ENCODE measurements at regions of chr11 and their contacts with region 1.

Region 1: DNA sequence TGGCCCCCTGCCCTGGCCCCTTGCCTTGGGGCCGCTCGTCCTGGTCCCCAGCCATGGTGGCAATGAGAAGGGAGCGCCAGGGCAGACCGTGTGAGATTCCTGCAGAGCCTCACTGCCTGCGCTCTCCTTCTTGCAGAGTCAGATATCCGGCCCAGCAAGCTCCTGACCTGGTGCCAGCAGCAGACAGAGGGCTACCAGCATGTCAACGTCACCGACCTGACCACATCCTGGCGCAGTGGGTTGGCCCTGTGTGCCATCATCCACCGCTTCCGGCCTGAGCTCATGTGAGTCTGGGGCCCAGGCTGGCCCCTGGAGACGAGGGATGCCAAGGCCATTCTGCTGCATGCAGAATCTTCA is 114.1 kb downstream of the MICAL2 start:
- DNase-seq: peak; percentile 98
- H3K4me3 Mint-ChIP-seq: peak overlapping the region; percentile 72
- H3K27ac Mint-ChIP-seq: peak overlapping the region; percentile 96
- H3K4me1 Mint-ChIP-seq: peaks cover 68% of the 10 kb centered on the region
- H3K27me3 Mint-ChIP-seq: no peaks in the 10 kb centered on the region

Region 2: DNA sequence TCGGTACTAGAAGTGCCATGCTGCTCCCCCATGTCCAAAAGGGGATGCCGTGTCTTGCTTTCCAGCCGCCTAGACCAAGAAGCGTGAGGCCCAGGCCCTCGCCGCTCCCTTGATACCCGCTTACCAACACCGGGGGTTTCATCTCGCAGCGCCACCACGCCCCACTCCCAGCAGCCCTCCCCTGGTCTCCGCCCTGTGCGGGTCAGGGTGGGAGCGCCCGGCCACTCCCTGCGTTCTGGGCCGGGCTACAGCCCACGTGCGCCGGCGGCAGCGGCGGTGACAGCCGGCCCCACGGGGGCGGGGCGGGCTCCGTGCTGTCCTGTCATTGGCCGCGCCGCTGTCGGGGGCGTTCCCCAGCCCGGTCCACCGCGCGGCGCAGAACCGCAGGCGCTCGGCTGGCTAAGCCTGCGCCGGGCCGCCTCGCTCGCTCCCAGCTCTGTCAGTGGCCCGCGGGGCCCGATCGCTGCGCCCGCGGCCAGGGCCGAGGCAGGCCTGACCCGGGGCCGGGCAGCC is 114.3 kb before region 1 on chr11 and contains the start of gene MICAL2:
- CTCF ChIA-PET with region 1: interaction called, 5 read pairs
- POLR2A ChIA-PET with region 1: interaction called, 33 read pairs
- DNase-seq: peak; percentile 89
- H3K4me3 Mint-ChIP-seq: peak within 1 kb of the TSS; percentile 82
- H3K27ac Mint-ChIP-seq: peak within 1 kb of the TSS; percentile 97
- H3K4me1 Mint-ChIP-seq: peaks cover 63% of the 10 kb centered on the region
- H3K27me3 Mint-ChIP-seq: no peaks in the 10 kb centered on the region
- total RNA-seq, gene MICAL2: 135 to 143 TPM

Region 3: DNA sequence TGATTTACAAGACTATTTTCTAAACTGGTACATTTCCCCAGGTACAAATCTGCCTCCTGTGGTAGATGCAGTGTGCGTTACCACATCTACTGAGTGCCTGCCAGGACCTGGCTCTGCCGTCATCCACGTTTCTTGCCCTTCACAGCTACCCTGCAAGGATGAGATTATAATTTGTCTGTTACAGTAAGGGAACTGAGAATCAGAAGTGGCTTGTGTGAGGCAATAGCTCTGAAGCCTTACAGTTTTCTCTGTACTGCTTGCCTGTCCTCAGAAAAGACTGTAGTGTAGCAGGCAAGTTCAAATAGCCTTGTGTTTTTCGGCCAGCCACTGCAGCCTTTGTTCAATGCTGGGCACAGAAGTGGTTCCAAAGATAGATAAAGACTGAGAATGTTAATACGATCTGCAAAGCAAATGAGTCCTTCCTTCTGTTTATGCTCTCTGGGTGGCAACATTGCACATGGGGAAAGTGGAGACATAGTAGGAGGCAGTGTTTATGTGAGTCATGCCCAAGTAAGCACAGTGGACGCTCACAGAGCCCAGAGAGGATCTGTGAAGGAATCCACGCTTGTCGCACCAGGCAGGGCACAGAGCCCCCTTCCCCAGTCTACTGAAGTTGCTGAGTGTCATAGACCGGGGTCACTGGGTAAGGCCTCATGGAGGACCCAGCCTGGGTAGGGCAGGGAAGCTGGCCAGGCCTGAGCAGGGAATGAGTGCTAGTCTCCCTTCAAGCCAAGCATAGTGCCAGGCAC is 65.0 kb before region 1 on chr11:
- CTCF ChIA-PET with region 1: no interaction called
- POLR2A ChIA-PET with region 1: interaction called, 16 read pairs
- DNase-seq: no peak
- H3K4me3 Mint-ChIP-seq: no peak overlapping the region
- H3K27ac Mint-ChIP-seq: peak overlapping the region; percentile 33
- H3K4me1 Mint-ChIP-seq: peaks cover 73% of the 10 kb centered on the region
- H3K27me3 Mint-ChIP-seq: no peaks in the 10 kb centered on the region

Region 4: GRCh38 chr11:12189543-12190235 is 34.8 kb before region 1 on chr11:
- CTCF ChIA-PET with region 1: interaction called, 6 read pairs
- POLR2A ChIA-PET with region 1: interaction called, 134 read pairs
- DNase-seq: peak; percentile 70
- H3K4me3 Mint-ChIP-seq: peak overlapping the region; percentile 58
- H3K27ac Mint-ChIP-seq: peak overlapping the region; percentile 83
- H3K4me1 Mint-ChIP-seq: peaks cover 67% of the 10 kb centered on the region
- H3K27me3 Mint-ChIP-seq: no peaks in the 10 kb centered on the region

Region 5: DNA sequence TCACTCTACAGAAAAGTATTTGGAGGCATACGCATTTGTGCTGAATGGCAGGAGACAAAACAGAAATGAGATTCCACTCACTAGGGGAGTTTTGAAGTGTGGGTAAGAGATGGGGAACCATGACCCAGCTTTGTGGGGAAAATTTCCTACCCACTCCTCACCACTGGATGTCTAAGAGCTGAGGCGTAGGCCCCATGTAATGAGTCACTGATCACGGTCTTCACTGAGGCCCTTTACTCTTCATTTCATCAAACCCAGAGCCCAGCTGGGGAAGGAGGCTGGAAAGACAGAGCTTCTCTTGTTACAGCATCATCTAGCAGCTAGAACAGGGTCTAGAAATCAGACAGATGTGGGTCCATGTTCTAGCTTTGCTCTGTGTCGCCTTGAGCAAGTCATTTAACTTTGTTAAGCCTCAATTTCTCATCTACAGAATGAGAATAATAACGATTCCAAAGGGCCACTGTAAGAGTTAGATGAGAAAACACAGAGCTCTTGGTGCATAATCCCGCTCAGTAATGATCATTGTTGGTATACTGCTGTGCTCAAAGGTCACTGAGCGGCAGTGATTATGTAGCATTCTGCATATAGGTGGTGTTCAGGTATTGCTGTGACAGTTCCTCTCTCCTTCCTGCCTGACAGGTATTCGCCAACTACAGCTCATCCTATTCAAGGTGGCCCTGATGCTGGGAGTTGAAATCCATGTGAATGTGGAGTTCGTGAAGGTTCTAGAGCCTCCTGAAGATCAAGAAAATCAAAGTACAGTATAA is 16.9 kb before region 1 on chr11:
- CTCF ChIA-PET with region 1: interaction called, 3 read pairs
- POLR2A ChIA-PET with region 1: interaction called, 134 read pairs
- DNase-seq: peak; percentile 35
- H3K4me3 Mint-ChIP-seq: no peak overlapping the region
- H3K27ac Mint-ChIP-seq: peak overlapping the region; percentile 56
- H3K4me1 Mint-ChIP-seq: peaks cover 46% of the 10 kb centered on the region
- H3K27me3 Mint-ChIP-seq: no peaks in the 10 kb centered on the region

Measured in activated CD4-positive, alpha-beta memory T cell treated with anti-CD3 and anti-CD28 coated beads, Interleukin-2, amount 10 ng/mL, durations not matched to agents 7 days and 5 days (primary cell).